ENCODE measurements at regions of chr5 and their contacts with region 1.

Region 1: GRCh38 chr5:179986328-179986727 is 78.6 kb upstream of the TBC1D9B start:
- DNase-seq: no peak
- ATAC-seq: no peak
- H3K4me3 ChIP-seq: no peak overlapping the region
- H3K4me3 Mint-ChIP-seq: no peak overlapping the region
- H3K27ac ChIP-seq: no peak overlapping the region
- H3K27ac Mint-ChIP-seq: no peak overlapping the region
- H3K4me1 ChIP-seq: no peaks in the 10 kb centered on the region
- H3K4me1 Mint-ChIP-seq: no peaks in the 10 kb centered on the region
- H3K27me3 ChIP-seq: no peaks in the 10 kb centered on the region
- H3K27me3 Mint-ChIP-seq: no peaks in the 10 kb centered on the region

Region 2: GRCh38 chr5:179954434-179954833 is 31.9 kb before region 1 on chr5:
- CTCF ChIA-PET with region 1: no interaction called
- POLR2A ChIA-PET with region 1: no interaction called
- DNase-seq: no peak
- ATAC-seq: no peak
- H3K4me3 ChIP-seq: no peak overlapping the region
- H3K4me3 Mint-ChIP-seq: no peak overlapping the region
- H3K27ac ChIP-seq: no peak overlapping the region
- H3K27ac Mint-ChIP-seq: no peak overlapping the region
- H3K4me1 ChIP-seq: no peaks in the 10 kb centered on the region
- H3K4me1 Mint-ChIP-seq: no peaks in the 10 kb centered on the region
- H3K27me3 ChIP-seq: no peaks in the 10 kb centered on the region
- H3K27me3 Mint-ChIP-seq: no peaks in the 10 kb centered on the region

Region 3: GRCh38 chr5:180018347-180019060 is 32.2 kb after region 1 on chr5:
- CTCF ChIA-PET with region 1: no interaction called
- POLR2A ChIA-PET with region 1: interaction called in 1 of 2 experiments, 11 read pairs
- DNase-seq: no peak
- ATAC-seq: no peak
- H3K4me3 ChIP-seq: no peak overlapping the region
- H3K4me3 Mint-ChIP-seq: no peak overlapping the region
- H3K27ac ChIP-seq: no peak overlapping the region
- H3K27ac Mint-ChIP-seq: no peak overlapping the region
- H3K4me1 ChIP-seq: no peaks in the 10 kb centered on the region
- H3K4me1 Mint-ChIP-seq: peaks cover 0 to 6% (median 0%) of the 10 kb centered on the region in 3 donors
- H3K27me3 ChIP-seq: no peaks in the 10 kb centered on the region
- H3K27me3 Mint-ChIP-seq: no peaks in the 10 kb centered on the region

Region 4: DNA sequence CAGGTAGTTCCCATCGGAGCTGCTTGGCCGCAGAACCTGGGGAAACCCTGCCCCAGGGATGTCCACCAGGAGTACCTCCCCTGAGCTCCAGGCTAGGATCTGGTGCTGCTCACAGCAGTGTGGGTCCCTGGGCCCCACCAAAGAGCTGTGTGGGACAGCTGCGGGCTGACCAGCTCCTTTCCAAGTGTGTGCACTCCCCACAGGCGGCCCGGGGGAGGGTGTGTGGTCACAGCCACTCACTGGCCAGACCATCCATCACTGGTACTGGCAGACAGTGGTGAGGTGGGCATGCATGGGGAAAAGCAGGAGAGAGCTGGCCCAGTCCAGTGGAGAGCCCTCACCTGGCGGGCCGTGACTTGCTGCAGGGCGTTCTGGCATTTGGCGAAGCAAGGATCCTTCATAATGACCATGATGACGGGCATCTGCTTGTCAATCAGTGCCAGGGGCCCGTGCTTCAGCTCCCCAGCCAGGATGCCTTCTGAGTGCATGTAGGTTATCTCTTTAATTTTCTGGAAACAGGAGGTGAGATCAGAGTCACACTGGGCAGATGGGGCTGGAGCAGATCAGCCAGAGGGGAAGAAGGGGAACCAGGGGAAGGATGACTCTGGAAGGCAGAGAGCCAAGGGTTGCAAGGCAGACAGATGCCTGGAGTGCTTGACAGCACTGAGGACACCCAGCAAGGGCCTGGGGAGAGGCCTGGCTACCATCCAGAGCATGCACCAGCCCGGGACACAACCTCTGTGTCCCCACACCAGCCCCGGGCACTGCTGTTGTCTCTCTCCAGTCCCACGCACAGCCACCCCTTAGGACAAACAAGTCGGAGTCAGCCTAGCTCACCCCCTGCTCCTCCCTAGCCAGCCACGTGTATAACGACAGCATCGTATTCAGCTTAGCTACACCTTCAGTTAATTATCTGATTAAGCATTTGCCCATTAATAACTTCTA is 318.4 kb after region 1 on chr5:
- CTCF ChIA-PET with region 1: no interaction called
- POLR2A ChIA-PET with region 1: no interaction called
- DNase-seq: no peak
- ATAC-seq: no peak
- H3K4me3 ChIP-seq: no peak overlapping the region
- H3K4me3 Mint-ChIP-seq: no peak overlapping the region
- H3K27ac ChIP-seq: no peak overlapping the region
- H3K27ac Mint-ChIP-seq: no peak overlapping the region
- H3K4me1 ChIP-seq: no peaks in the 10 kb centered on the region
- H3K4me1 Mint-ChIP-seq: no peaks in the 10 kb centered on the region
- H3K27me3 ChIP-seq: peaks cover 0 to 19% of the 10 kb centered on the region in 2 experiments
- H3K27me3 Mint-ChIP-seq: peaks cover 0 to 10% of the 10 kb centered on the region in 2 donors

Measured in T-cell (primary cell).